ENCODE measurements at regions of chr12 and their contacts with region 1.

Region 1: DNA sequence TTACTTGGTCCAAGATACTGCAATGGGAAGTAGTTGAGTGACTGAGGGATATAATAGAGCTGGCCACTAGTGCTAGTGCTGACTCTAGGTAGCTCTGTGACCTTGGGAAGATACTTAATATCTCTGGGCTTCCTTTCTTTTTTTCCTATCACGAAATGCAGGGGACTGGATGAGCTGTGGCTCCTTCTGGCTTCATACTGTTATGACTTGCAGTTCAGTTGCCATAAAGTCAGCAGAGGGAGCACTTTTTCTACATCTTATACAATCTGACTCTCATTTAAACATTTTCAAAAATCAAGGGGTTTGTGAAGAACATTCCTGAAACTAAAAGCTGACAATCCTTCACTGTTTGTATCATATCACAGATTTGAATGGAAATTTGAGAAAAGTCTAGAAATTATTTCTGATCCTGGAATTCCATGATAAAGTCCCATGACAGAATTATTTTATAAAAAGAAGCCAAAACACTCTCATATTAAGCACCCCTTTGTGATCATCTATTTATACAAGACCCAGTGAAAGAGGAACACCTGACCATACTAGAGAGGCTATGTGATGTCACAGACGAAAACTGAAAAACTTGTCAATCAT is 5.4 kb downstream of the BHLHE41 start:
- DNase-seq: peak; percentile 76
- H3K4me3 ChIP-seq: no peak overlapping the region
- H3K27ac ChIP-seq: no peak overlapping the region
- H3K4me1 ChIP-seq: peaks cover 19% of the 10 kb centered on the region
- H3K27me3 ChIP-seq: peaks cover 19% of the 10 kb centered on the region
- CTCF ChIP-seq: peak; percentile 68

Region 2: DNA sequence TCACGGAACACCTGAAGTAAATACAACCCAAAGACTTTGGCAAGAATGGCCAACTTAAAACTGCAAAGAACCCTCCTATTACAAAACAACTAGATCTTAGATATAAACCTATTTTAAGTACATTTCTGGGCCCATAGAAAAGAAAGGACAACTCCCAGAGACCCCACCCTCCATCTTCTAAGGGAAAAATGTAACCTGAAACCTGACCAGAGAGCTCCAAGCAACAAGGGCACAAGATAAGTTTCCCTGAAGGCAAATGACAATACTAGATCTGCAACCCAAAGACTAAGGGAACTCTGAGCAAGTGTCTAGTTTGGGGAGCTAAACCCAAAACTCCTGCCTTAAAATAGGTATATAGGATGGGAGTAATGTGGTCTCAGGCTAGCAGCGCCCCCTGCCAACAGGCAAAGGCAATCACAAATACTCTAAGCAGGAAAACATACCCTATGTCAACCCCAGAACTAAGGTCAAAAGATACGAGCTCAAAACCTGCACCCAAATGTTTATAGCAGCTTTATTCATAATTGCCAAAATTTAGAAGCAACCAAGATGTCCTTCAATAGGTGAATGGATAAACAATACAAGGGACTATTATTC is 494.6 kb after region 1 on chr12:
- CTCF ChIA-PET with region 1: interaction called, 12 read pairs
- POLR2A ChIA-PET with region 1: no interaction called
- intact Hi-C with region 1: loop called (anchors 2 kb)
- DNase-seq: peak; percentile 62
- H3K4me3 ChIP-seq: no peak overlapping the region
- H3K27ac ChIP-seq: no peak overlapping the region
- H3K4me1 ChIP-seq: no peaks in the 10 kb centered on the region
- H3K27me3 ChIP-seq: no peaks in the 10 kb centered on the region
- CTCF ChIP-seq: peak; percentile 84

Region 3: DNA sequence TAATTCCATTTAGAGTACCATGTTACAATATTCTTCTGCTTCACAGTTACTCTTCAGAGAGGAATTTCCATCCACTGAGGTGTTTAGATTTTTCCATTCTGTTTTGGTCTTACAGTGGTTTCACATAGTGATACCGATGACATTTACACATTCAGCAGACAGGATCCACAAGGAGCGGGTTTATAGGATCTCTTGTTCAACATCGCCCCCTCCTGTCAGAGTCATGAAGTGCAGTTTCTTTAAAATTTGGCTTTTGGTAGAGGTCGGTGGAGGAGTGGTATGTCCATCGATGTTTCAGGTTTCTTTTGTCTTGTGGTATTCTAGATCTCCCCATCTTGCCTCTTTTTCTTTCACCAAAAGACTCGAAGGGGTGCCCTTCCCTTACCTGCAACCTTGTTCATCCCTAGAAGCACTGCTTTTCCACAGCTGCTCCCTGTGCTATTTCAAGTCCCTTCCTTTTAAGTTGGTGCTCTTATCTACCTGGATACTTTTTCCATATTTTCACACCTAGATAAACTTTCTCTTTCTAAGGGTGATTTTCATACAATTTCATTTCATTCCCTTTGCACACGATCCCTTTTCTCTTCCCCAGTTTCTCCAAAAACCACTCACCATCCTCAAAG is 532.2 kb after region 1 on chr12:
- CTCF ChIA-PET with region 1: no interaction called
- POLR2A ChIA-PET with region 1: interaction called, 3 read pairs
- intact Hi-C with region 1: loop called (anchors 2 kb)
- DNase-seq: peak; percentile 83
- H3K4me3 ChIP-seq: no peak overlapping the region
- H3K27ac ChIP-seq: no peak overlapping the region
- H3K4me1 ChIP-seq: peaks cover 8% of the 10 kb centered on the region
- H3K27me3 ChIP-seq: no peaks in the 10 kb centered on the region
- CTCF ChIP-seq: peak; percentile 82

Region 4: DNA sequence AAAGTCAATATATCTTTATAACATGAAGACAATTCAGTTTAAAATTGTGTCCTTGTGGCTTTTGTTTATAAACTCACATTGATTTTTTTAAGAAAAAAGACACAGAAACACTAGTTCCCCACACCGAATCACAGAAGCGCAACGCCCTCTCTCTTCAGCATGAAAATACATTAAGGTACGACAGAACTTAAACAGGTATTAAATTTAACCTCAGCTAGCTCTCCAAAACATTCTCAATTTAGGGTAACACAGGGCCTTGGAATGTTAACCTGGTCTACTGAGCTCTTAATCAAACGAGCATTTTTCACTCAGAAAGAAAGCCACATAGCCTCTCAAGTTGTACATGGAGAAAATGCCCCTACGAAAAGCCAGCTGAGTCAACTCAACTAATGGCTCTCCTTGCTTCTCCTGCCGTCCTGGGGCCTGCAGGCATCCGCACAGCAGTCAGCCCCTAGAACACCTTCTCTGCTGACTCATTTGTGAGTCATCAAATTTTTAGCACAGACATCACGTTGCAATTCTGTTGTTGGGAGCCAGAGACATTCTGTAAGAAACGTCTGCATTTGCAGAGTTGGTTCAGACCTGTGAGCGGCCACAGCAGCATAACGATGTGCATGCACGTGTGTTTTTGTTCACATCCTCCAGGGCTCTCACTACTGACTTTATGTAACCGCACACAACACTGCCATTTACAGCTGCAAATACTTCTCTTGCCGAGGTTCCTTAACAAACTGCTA is 571.9 kb after region 1 on chr12:
- CTCF ChIA-PET with region 1: interaction called, 17 read pairs
- POLR2A ChIA-PET with region 1: no interaction called
- intact Hi-C with region 1: no loop called
- DNase-seq: peak; percentile 80
- H3K4me3 ChIP-seq: no peak overlapping the region
- H3K27ac ChIP-seq: no peak overlapping the region
- H3K4me1 ChIP-seq: peaks cover 30% of the 10 kb centered on the region
- H3K27me3 ChIP-seq: no peaks in the 10 kb centered on the region
- CTCF ChIP-seq: no peak

Measured in A673 (cell line).